Dorsolateral prefrontal cortex (tissue), 120 donors: ENCODE measurements at regions of chr1 and their contacts with region 1.

Region 1: DNA sequence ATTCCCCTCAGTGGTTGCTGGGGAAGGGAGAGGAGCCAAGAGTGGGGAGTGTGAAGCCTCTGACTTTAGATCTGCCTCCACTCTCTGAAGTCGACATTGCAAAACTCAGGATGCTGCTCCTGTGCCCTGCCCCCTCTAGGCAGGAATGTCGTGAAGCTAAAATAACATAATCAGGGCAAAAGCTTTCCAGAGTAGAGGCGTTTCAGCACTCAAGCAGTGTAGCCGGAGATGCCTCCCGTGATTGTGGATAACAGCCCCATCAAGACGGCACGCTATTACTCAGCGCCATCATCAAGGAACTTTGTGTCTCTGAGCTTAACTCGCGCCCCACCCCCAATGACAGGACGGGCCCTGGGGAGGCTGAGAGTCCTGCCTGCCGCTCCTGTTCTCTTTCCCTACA is 60.0 kb downstream of the FBXO2 start:
- DNase-seq: peak in 2 of 10 donors; percentile 8 to 14
- H3K4me3 ChIP-seq: no peak overlapping the region
- H3K27ac ChIP-seq: no peak overlapping the region
- H3K27me3 ChIP-seq: peaks cover 0 to 14% (median 0%) of the 10 kb centered on the region in 45 donors
- CTCF ChIP-seq: no peak

Region 2: DNA sequence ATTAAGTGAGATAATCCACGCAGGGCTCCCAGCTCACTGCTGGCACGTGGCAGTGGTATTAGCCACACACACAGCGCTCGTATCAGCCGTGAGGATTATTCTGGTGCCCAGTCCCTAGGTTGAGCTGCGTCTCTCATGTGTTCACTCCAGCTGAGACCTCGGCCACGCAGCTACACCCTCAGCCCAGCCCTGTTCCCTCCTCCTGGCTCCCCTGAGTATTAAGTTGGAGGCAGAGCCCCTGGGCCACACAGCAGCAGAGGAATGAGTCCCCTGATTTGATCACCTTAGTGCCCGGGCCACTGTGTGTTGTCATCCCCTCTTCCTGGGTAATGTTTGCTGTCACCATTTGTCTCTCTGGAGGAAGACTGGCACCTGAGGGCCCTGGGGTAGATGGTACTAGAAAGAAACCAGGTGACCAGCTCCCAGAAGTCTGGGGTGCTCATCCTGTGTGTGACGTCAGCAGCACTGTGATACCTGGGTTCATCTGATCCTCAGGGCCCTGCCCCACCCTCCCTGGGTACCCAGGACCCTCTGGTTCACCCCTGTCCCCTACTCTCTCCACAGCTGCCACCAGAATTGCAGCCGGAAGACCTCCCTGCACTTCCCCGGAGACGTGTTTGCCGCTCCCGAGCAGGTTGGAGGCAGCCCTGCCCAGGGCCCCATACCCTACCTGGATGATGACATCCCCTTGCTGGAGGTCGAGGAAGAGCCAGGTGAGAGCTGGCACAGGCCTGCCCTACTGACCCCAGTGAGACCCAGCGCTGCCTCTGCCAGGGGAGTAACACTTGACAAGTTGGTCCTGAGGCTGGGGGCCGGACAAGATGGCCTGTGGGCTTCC is 75.2 kb before region 1 on chr1:
- intact Hi-C with region 1: loop called in 1 of 2 experiments (anchors 10 kb)
- DNase-seq: peak in 4 of 10 donors; percentile 4 to 32 (median 20)
- H3K4me3 ChIP-seq: no peak overlapping the region
- H3K27ac ChIP-seq: no peak overlapping the region
- H3K27me3 ChIP-seq: no peaks in the 10 kb centered on the region
- CTCF ChIP-seq: no peak

Region 3: GRCh38 chr1:11617310-11617709 is 23.1 kb after region 1 on chr1:
- intact Hi-C with region 1: no loop called
- DNase-seq: no peak
- H3K4me3 ChIP-seq: no peak overlapping the region
- H3K27ac ChIP-seq: no peak overlapping the region
- H3K27me3 ChIP-seq: peaks cover 0 to 12% (median 0%) of the 10 kb centered on the region in 45 donors
- CTCF ChIP-seq: no peak